Caco-2 (cell line): ENCODE measurements at regions of chr2 and their contacts with region 1.

Region 1: DNA sequence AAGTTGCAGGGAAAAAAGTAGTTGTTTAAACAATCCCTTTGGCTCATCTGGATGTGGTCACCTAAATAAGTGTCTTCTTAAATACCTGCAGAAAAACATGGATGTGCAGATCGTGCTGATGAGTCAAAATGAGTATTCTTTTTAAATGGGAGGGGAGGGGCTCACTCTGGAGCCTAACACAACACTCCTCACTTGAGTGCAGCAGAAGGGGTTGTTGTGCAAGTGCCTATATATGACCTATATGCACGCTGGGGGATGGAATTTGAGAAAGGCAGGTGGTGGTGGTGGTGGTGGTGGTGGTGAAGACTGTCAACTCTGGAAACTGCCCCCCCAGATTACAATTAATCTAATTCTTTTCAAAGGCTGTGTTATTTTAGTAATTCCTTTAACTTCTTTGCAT is 77.9 kb upstream of the FAM124B start:
- DNase-seq: no peak
- H3K4me3 ChIP-seq: no peak overlapping the region
- H3K4me3 Mint-ChIP-seq: no peak overlapping the region
- H3K27ac Mint-ChIP-seq: no peak overlapping the region
- H3K4me1 ChIP-seq: peaks cover 3% of the 10 kb centered on the region
- H3K4me1 Mint-ChIP-seq: no peaks in the 10 kb centered on the region
- H3K27me3 ChIP-seq: no peaks in the 10 kb centered on the region
- H3K27me3 Mint-ChIP-seq: peaks cover 4% of the 10 kb centered on the region
- CTCF ChIP-seq: no peak

Region 2: DNA sequence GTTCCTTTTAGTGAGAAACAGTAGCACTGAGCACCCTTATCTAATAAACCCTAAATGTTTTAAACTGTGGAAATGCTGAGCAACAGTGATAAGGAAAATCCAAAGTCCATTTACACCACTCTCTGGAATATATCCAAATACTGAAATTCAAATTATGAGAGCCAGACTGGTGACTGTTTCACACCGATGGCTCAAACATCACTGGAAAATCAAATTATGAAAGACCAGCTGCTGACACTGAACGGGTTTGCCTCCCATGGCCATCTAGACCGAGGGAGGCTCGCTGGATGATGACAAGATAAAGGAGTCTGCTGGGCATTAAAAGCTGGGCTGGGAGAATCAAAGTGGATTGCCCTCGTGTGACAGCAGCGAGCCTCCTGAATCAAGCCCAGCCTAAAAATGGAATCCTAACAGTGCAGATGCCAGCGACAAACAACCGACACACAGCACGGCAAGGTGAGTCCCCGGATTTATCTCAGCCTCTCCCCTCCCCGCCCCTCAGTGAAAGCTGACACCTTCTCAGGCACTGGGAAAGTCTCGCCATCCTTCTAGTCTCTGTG is 471.0 kb before region 1 on chr2:
- CTCF ChIA-PET with region 1: no interaction called
- POLR2A ChIA-PET with region 1: no interaction called
- intact Hi-C with region 1: loop called (anchors 10 kb)
- DNase-seq: peak in 1 of 2 experiments; percentile 23
- H3K4me3 ChIP-seq: no peak overlapping the region
- H3K4me3 Mint-ChIP-seq: peak overlapping the region; percentile 17
- H3K27ac Mint-ChIP-seq: no peak overlapping the region
- H3K4me1 ChIP-seq: peaks cover 22% of the 10 kb centered on the region
- H3K4me1 Mint-ChIP-seq: peaks cover 28% of the 10 kb centered on the region
- H3K27me3 ChIP-seq: no peaks in the 10 kb centered on the region
- H3K27me3 Mint-ChIP-seq: no peaks in the 10 kb centered on the region
- CTCF ChIP-seq: no peak

Region 3: DNA sequence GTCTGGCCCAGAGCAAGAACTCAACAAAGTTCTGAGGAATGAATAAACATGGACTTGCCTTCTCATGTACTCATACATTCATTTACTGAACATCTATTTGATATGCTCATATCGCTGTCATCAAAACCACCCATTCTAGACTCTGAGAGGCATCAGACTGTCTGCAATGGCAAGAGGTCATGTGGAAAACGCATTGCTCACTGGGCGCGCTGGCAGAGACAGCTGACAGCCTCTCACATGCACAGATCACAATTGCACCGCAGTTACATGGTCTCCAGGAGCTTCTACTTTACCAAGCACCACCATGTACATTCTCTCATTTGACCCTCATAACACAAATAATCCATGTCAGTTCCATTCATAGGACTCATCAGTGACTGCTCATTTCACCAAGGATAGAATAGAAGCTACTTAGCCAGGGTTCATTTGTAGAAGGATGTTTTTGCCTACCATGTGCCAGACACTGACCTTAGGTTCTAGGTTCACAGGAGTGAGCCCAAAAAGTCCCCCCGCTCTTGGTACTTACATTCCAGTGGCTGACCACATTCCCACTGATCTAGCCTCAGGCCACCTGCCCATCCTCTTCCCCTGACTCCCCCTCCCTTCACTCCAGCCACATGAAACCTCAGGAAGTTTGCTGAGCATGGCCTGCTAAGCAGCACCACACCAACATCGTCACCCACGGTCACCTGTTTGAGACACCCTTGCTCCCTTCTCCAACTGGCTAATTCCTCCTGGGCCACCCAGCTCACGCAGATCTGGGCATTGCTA is 84.0 kb before region 1 on chr2:
- CTCF ChIA-PET with region 1: no interaction called
- POLR2A ChIA-PET with region 1: interaction called, 11 read pairs
- intact Hi-C with region 1: no loop called
- DNase-seq: no peak
- H3K4me3 ChIP-seq: no peak overlapping the region
- H3K4me3 Mint-ChIP-seq: no peak overlapping the region
- H3K27ac Mint-ChIP-seq: no peak overlapping the region
- H3K4me1 ChIP-seq: no peaks in the 10 kb centered on the region
- H3K4me1 Mint-ChIP-seq: no peaks in the 10 kb centered on the region
- H3K27me3 ChIP-seq: no peaks in the 10 kb centered on the region
- H3K27me3 Mint-ChIP-seq: peaks cover 9% of the 10 kb centered on the region
- CTCF ChIP-seq: no peak

Region 4: DNA sequence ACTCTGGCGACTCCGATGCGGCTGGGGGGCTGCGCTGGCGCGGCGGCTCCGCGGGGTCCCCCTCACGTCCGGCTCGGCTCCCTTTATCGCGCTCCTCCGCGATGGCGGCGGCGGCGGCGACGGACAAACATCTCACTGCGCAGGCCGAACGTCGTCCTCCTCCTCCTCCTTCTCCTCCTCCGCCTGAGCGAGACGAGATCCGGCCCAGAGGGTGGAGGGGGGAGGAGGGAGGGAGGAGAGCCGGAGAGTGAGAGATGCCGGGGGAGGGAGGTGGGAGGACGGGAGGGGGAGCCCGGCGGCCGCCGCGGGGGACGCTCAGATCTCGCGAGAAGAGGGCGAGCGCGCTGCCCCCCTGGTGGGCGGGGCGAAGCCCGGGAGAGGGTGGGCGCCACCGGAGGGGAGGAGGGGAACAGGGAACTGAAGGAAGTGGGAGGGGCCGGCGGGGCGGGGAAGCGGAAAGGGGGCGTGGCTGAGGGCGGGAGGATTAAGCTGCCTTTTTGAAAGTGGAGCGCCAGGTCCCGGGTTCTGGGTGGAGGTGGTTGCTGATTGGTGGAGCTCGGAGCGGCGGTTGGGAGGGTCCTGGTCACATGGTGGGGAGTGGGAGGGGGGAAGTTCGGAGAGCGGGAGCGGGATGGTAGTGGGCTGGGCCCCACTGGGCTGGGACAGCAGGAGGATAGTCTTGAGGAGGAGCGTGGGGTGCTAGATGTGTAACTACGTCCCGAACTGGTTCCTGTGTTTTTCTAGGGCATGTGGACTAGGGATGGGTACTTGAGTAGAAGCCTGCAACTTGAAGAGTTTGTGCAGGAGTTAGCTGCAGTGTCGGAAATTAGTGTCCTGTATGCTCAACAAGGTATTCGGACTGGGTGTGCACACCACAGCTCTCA is 105.6 kb after region 1 on chr2 and contains the start of gene CUL3:
- CTCF ChIA-PET with region 1: no interaction called
- POLR2A ChIA-PET with region 1: no interaction called
- intact Hi-C with region 1: loop called (anchors 2 kb)
- DNase-seq: peak; percentile 96 to 99
- H3K4me3 ChIP-seq: peak within 1 kb of the TSS; percentile 72
- H3K4me3 Mint-ChIP-seq: peak within 1 kb of the TSS; percentile 96
- H3K27ac Mint-ChIP-seq: peak within 1 kb of the TSS; percentile 88
- H3K4me1 ChIP-seq: no peaks in the 10 kb centered on the region
- H3K4me1 Mint-ChIP-seq: no peaks in the 10 kb centered on the region
- H3K27me3 ChIP-seq: no peaks in the 10 kb centered on the region
- H3K27me3 Mint-ChIP-seq: no peaks in the 10 kb centered on the region
- CTCF ChIP-seq: no peak
- total RNA-seq, gene CUL3: 66.0 and 66.3 TPM in 2 replicates